Head of caudate nucleus (tissue), 42 donors: ENCODE measurements at regions of chr10 and their contacts with region 1.

Region 1: DNA sequence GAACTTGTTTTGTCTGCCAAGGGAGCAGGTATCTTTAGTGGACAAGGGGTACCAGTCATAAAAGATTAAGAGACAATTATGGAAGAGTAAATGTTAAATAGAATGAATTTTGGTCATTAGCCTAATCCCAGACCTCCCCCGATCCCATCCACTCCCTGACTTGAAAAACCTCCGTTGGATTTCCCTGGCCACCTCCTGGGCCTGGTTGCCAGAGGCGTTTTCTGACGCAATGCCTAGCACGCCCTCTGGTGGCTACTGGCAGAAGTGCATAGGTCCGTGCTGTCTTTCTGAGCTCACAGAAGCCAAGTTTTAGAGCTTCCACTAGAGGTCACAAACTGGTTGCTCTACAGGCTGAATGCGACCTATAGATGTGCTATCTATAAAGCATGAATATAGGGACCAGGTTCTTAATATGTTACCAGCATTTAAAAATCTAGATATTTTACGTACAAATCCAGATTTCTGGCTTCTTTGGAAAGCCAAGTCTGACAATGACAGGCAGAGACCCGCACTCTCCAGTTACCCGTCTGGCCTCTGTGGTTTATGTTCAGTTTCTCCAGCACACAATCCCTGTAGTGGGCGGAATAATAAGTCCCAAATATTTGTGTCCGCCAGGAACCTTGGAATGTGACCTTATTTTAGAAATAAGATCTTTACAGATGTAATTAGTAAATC is 39.8 kb downstream of the SPOCK2 start:
- DNase-seq: peak; percentile 72 to 99 (median 96)

Region 2: DNA sequence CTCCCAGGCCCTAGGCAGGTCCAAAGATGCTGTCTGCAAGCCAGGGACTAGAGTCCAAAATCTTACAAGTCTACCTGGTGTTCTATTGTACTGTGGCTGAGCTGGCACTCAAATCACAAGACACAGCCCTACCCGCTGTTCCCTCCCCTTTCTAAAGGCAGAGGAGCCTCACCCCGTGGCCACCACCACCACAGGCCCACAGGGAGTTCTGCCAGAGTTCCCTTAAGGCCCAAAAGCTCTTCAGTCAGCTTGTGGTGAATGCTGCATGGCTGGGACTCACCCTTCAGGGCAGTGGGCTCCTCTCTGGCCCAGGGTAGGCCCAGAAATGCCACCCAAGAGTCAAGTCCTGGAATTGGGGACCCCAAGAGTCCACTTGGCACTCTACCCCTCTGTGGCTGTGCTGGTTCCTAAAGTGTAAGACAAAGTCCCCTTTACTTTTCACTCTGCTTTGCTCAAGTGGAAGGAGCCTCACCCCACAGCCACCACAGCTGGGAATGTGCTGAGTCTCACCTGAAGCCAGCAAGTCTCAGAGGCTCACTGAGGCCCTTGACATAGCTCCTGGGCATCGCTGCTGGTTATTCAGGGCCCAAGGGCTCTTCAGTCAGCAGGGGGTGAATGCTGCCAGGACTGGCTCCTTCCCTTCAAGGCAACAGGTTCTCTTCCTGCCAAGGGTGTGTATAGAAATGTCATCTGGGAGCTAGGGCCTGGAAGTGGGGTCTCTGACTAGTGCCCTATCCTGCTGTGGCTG is 148.7 kb before region 1 on chr10:
- intact Hi-C with region 1: loop called (anchors 5 kb)
- DNase-seq: no peak

Region 3: DNA sequence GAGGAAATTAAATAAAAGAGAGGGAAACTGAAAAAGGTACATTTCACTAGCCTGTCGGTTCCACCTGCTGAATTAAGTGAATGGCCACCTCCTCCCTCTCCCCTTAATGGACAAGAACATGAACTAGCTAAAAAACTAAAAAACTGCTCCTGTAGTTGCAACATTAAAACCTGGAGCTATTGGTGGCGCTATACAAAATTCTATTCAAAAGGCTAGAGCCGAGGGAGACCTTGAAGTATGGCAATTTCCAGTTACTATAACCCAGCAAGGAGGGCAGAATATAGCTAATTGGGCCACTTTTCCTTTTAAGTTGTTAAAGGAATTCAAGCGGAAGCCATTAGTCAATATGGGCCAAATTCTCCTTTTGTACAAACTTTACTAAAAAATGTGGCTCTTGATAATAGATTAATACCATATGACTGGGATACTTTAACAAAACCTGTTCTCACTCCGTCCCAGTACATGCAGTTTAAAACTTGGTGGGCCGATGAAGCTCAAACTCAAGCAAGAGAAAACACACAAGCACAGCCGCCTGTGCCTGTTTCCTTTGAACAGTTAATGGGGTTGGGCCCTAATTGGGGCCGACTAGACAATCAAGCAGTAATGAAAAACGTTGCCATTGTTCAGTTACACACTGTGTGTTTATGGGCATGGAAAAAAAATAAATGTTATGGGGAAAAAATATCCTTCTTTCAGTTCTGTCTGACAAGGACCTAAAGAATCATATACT is 90.9 kb before region 1 on chr10:
- intact Hi-C with region 1: loop called (anchors 5 kb)
- DNase-seq: peak in 1 of 42 donors; percentile 28

Region 4: GRCh38 chr10:72061491-72061890 is 12.9 kb after region 1 on chr10:
- intact Hi-C with region 1: no loop called
- DNase-seq: no peak

Region 5: DNA sequence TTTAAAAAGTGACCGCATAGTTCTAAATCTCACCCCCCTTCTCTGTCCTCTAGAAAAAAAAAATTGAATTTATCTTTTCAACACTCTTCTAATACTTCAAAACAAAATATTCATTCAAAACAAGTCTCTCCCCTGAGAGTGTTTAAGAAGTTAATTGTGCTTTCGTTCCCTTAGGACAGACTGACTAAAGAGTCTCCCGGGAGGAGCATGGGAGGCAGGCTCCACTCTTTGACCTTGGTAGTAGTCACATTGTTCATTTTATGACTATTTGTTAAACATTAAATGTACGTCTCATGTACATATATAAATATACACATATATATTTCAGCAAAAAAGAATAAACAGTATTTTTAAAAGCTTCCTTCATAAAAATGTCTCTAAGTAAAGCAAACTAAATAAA is 75.0 kb after region 1 on chr10:
- intact Hi-C with region 1: no loop called
- DNase-seq: no peak